Mammary epithelial cell (primary cell): ENCODE measurements at regions of chr16 and their contacts with region 1.

Region 1: GRCh38 chr16:85717393-85718121 is 28.8 kb upstream of the GINS2 start:
- DNase-seq: no peak
- H3K4me3 ChIP-seq: no peak overlapping the region
- H3K27ac ChIP-seq: no peak overlapping the region
- H3K4me1 ChIP-seq: peaks cover 76% of the 10 kb centered on the region
- H3K27me3 ChIP-seq: no peaks in the 10 kb centered on the region
- CTCF ChIP-seq: peak; percentile 41 to 63

Region 2: GRCh38 chr16:85659805-85660495 is 57.6 kb before region 1 on chr16:
- CTCF ChIA-PET with region 1: no interaction called
- dilution Hi-C with region 1: no loop called
- in situ Hi-C with region 1: no loop called
- intact Hi-C with region 1: loop called (anchors 2 kb)
- DNase-seq: peak; percentile 36
- H3K4me3 ChIP-seq: no peak overlapping the region
- H3K27ac ChIP-seq: no peak overlapping the region
- H3K4me1 ChIP-seq: no peaks in the 10 kb centered on the region
- H3K27me3 ChIP-seq: no peaks in the 10 kb centered on the region
- CTCF ChIP-seq: peak; percentile 87 to 93

Region 3: DNA sequence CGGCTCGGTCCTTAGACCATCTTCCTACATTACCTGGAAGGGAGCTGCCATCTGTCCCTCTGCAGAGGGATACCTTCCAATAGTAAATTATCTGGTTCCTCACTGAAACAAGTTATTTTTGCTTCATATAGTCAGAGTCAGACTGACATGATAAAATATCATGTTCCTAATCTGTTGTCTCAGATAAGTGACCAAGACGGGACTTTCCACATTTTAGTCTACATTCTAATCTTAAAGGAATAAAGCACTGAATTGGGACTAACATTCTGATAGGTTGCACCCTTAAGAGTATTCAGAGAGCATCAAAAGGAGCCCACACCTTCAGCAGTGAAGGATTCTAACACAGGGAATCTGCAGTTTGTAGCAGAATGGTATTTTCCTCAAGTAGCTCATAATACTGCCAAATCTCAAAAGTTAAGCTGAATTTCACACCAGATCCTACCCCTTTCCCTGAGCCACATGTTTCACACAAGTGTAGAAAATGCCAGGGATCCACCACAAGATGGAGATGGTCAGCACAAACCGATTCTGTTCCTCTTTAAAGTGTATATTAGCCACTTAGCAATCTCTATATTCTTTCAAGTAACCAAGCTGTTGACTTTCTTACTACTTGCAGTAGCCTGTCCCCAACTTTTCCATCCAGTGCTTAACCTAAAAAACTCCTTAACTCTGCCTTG is 42.2 kb before region 1 on chr16:
- CTCF ChIA-PET with region 1: interaction called, 4 read pairs
- dilution Hi-C with region 1: no loop called
- in situ Hi-C with region 1: no loop called
- intact Hi-C with region 1: loop called (anchors 1 kb)
- DNase-seq: no peak
- H3K4me3 ChIP-seq: no peak overlapping the region
- H3K27ac ChIP-seq: no peak overlapping the region
- H3K4me1 ChIP-seq: peaks cover 2% of the 10 kb centered on the region
- H3K27me3 ChIP-seq: no peaks in the 10 kb centered on the region
- CTCF ChIP-seq: peak; percentile 52 to 56